A673 (cell line): ENCODE measurements at regions of chrX and their contacts with region 1.

Region 1: GRCh38 chrX:110847334-110847733 is 51.7 kb upstream of the CHRDL1 start:
- DNase-seq: peak; percentile 77
- H3K4me3 ChIP-seq: no peak overlapping the region
- H3K27ac ChIP-seq: no peak overlapping the region
- H3K4me1 ChIP-seq: no peaks in the 10 kb centered on the region
- H3K27me3 ChIP-seq: no peaks in the 10 kb centered on the region
- CTCF ChIP-seq: peak; percentile 67

Region 2: DNA sequence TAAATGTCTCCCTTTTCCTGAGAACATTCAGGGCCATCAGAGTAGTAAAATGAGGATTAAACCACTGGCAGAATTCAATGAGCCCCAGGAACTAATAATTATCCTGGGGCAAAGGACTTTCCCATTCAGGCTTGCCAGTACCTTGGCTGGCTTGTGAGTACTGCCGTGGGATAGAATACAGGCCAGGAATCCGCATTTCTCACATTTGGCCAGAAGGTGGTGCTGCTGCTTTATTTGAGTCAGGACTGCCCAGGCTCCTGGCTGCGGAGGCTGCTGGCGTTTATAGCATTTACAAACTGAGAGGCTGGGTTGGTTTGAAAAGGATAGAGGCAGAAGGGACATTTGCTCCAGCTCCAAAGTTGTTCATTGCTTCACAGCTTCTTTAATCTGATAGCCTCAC is 397.3 kb before region 1 on chrX:
- CTCF ChIA-PET with region 1: interaction called, 3 read pairs
- POLR2A ChIA-PET with region 1: no interaction called
- intact Hi-C with region 1: loop called (anchors 1 kb)
- DNase-seq: peak; percentile 84
- H3K4me3 ChIP-seq: no peak overlapping the region
- H3K27ac ChIP-seq: no peak overlapping the region
- H3K4me1 ChIP-seq: no peaks in the 10 kb centered on the region
- H3K27me3 ChIP-seq: peaks cover under 1% of the 10 kb centered on the region
- CTCF ChIP-seq: peak; percentile 80

Region 3: GRCh38 chrX:110836982-110837381 is 10.4 kb before region 1 on chrX:
- CTCF ChIA-PET with region 1: interaction called, 10 read pairs
- POLR2A ChIA-PET with region 1: no interaction called
- intact Hi-C with region 1: no loop called
- DNase-seq: peak; percentile 29
- H3K4me3 ChIP-seq: no peak overlapping the region
- H3K27ac ChIP-seq: no peak overlapping the region
- H3K4me1 ChIP-seq: no peaks in the 10 kb centered on the region
- H3K27me3 ChIP-seq: no peaks in the 10 kb centered on the region
- CTCF ChIP-seq: peak; percentile 55